ENCODE measurements at regions of chr5 and their contacts with region 1.

Region 1: GRCh38 chr5:72920690-72921502 is 34.9 kb upstream of the FCHO2 start:
- DNase-seq: peak; percentile 68
- ATAC-seq: peak; percentile 85
- H3K4me3 ChIP-seq: no peak overlapping the region
- H3K27ac ChIP-seq: no peak overlapping the region
- H3K4me1 ChIP-seq: no peaks in the 10 kb centered on the region
- H3K27me3 ChIP-seq: no peaks in the 10 kb centered on the region
- CTCF ChIP-seq: peak; percentile 73

Region 2: DNA sequence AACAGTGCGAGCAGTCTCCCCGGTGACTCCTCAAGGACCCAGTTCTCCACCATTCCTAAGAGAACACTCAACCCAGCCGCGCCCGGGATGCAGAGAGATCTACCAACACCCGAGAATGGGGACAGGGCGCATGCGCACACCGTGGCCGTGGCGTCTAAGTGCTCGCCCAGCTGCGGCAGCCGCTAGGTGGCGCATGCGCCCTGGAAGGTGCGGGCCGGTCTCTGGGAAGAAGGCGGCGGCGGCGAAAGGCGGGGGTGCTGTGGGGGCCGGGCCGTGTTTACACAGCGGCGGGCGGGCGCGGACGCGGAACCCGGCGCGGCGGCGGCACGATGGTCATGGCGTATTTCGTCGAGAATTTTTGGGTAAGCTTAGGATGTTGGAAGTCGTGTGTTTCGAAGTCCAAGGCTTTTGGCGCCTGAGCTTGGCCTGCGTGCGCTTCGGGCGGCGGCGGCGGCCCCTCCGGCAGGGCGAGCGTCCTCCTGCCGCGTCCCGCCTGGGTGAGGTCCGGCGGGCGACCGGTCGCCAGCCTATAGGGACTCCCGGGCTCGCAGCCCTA is 35.0 kb after region 1 on chr5 and contains the start of gene FCHO2:
- CTCF ChIA-PET with region 1: no interaction called
- POLR2A ChIA-PET with region 1: no interaction called
- intact Hi-C with region 1: loop called (anchors 2 kb)
- DNase-seq: peak; percentile 97
- ATAC-seq: peak; percentile 68
- H3K4me3 ChIP-seq: peak within 1 kb of the TSS; percentile 71
- H3K27ac ChIP-seq: peak within 1 kb of the TSS; percentile 88
- H3K4me1 ChIP-seq: peaks cover 51% of the 10 kb centered on the region
- H3K27me3 ChIP-seq: no peaks in the 10 kb centered on the region
- CTCF ChIP-seq: peak; percentile 62
- total RNA-seq, gene FCHO2: 3.7 and 5.9 TPM in 2 replicates

Region 3: DNA sequence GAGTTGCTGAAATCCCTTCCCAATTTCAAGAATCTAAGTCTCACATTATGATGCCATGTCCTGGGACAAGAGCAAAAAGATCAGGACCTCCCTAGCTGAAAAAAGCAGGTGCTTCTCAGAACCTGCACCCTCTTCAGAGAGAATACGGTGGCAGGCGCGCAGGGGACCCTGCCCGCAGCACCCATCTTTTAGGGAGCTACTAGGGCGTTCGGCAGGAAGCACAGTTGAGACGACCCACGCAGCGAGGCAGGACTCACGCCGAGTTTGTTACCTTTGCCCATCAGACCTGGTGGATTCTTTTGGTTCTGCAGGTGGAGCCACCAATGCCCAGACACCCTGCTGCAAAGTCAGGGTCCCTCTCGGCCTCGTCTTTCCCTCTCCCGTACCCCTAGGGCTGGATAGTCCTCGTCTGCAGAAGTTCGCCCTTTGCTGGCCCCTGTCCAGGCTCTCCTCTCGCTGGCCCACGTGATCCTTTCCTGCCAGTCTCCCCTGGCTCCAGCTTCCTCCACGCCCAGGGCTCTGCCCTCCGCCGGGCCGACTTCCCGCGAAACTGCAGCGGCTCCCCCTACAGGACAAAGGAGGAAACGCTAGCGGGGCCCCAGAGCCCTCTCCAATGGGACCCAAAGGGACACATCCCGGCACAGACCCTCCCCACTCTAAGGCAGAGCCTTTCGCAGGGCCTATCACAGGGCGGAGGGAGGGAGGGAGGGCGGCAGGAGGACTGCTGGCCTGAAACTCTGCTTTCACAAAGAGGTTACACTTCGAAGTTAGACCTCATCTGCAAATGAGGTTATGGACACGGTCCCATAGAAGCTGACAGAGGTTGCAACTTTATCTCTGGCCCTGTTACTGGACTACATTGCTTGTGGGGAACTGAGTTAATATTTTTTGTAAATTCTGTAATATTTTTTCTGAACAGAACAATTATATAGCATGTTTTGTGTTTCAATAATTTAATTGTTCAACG is 280.9 kb after region 1 on chr5:
- CTCF ChIA-PET with region 1: interaction called, 3 read pairs
- POLR2A ChIA-PET with region 1: no interaction called
- intact Hi-C with region 1: loop called (anchors 5 kb)
- DNase-seq: peak; percentile 85
- ATAC-seq: peak; percentile 99
- H3K4me3 ChIP-seq: peak overlapping the region; percentile 45; the same call in 1 of the 2 replicates
- H3K27ac ChIP-seq: no peak overlapping the region
- H3K4me1 ChIP-seq: 0 out of 2 replicates have a peak, but pooled peaks cover 3% of the 10 kb centered on the region
- H3K27me3 ChIP-seq: no peaks in the 10 kb centered on the region
- CTCF ChIP-seq: peak; percentile 79

Measured in PC-3 (cell line).